ENCODE measurements at regions of chr1 and their contacts with region 1.

Region 1: GRCh38 chr1:33181921-33182341 is at the start of gene TRIM62:
- DNase-seq: peak; percentile 57 to 80 (median 73)
- ATAC-seq: peak; percentile 85
- H3K4me3 ChIP-seq: peak within 1 kb of the TSS; percentile 78
- H3K4me3 Mint-ChIP-seq: peak within 1 kb of the TSS; percentile 84 to 95 (median 89)
- H3K27ac ChIP-seq: peak within 1 kb of the TSS; percentile 64
- H3K27ac Mint-ChIP-seq: peak within 1 kb of the TSS; percentile 47 to 89 (median 79)
- H3K4me1 ChIP-seq: peaks cover 8 to 12% of the 10 kb centered on the region in 2 donors
- H3K4me1 Mint-ChIP-seq: peaks cover 22 to 35% (median 31%) of the 10 kb centered on the region in 7 donors
- H3K27me3 ChIP-seq: no peaks in the 10 kb centered on the region
- H3K27me3 Mint-ChIP-seq: peaks cover 0 to 35% (median 7%) of the 10 kb centered on the region in 5 donors
- total RNA-seq, gene TRIM62: 13.2 to 24.2 (median 19.4) TPM

Region 2: DNA sequence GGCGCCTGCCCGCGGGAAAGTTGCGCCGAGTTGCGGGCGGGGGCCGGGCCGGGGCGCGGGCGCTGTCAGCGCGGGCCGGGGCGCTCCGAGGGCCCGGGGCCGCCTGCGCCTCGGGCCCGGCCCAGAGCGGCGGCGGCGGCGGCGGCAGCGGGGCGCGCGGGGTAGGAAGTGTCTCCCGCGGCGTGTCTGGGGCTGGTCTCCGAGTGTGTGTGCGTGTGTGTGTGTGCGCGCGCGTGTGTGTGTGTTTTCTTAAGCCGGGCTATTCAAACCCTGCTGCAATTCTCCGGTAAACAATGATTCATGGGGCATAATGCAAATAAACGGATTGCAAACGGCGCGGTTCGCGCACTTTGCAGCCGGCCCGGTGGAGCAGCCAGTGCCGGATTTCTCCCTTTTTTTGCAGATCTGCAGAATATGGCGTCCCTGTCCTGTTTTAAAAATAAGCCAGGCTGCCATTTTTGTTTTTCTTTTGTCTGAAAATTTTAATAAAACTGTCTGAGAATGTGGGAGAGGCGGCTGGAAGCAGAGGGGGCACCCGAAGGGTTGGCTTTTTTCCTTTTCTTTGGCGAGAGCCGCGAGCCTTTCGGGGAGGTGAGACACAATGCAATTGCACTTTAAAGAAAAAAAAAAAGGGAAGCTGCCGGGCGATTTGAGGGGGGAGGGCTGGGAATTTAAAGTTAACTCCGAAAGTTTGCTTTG is 74.9 kb after region 1 on chr1:
- CTCF ChIA-PET with region 1: no interaction called
- POLR2A ChIA-PET with region 1: interaction called, 4 read pairs
- intact Hi-C with region 1: loop called (anchors 5 to 10 kb)
- DNase-seq: peak in 8 of 9 donors; percentile 41 to 68 (median 62)
- ATAC-seq: peak; percentile 80
- H3K4me3 ChIP-seq: peak overlapping the region; percentile 84
- H3K4me3 Mint-ChIP-seq: peak overlapping the region; percentile 97 to 100 (median 99)
- H3K27ac ChIP-seq: peak overlapping the region; percentile 74
- H3K27ac Mint-ChIP-seq: peak overlapping the region; percentile 97 to 99 (median 98)
- H3K4me1 ChIP-seq: peaks cover 16 to 31% of the 10 kb centered on the region in 2 donors
- H3K4me1 Mint-ChIP-seq: peaks cover 29 to 47% (median 42%) of the 10 kb centered on the region in 7 donors
- H3K27me3 ChIP-seq: no peaks in the 10 kb centered on the region
- H3K27me3 Mint-ChIP-seq: peaks cover 0 to under 1% (median 0%) of the 10 kb centered on the region in 5 donors

Region 3: DNA sequence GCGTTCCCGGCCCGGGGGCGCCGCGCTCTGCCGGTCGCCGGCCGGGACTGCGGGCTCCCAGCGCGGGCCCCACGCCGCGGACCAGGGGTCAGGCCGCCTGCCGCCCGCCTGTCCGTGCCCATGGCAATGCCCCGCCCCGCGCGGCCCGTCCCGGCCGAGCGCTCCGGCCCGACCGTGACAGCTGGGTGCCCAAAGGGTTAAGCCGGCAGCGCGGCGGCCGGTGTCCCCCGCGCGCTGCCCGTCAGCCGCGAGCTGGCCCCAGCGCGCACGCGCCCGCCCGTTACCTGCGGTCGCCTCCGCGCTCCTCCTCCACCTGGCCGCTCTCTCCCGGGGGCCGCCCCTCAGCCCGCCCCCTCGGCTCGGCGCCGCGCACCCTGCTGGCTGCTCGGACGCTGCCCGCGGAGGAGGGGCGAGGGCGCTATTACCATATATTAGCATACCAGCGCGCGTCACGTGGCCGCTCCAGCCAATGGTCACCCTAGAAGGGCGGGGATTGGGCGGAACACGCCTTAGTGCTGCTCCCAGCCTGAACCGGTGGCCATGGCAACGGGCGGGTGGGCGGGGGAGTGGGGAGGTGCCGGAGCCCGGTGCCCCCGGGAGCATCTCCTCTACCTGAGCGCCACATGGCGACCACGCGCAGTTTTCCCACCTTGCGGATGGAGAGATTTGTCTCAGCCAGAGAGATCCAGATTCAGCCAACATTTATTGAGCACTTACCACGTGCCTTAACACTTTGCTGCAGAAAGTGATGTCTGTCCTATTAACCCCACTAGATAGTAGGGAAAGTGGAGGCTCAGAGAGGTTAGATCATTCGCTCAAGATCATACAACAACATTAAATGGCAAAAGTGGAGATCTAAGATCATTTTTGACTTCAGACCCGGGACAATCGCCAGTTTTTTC is 249.0 kb after region 1 on chr1 and contains the start of gene PHC2:
- CTCF ChIA-PET with region 1: no interaction called
- POLR2A ChIA-PET with region 1: no interaction called
- intact Hi-C with region 1: loop called in 1 of 2 experiments (anchors 1 kb)
- DNase-seq: peak; percentile 70 to 92 (median 86)
- ATAC-seq: peak; percentile 97
- H3K4me3 ChIP-seq: peak within 1 kb of the TSS; percentile 18
- H3K4me3 Mint-ChIP-seq: peak within 1 kb of the TSS; percentile 57 to 83 (median 74)
- H3K27ac ChIP-seq: no peak within 1 kb of the TSS
- H3K27ac Mint-ChIP-seq: peak within 1 kb of the TSS in 4 of 9 donors; percentile 25 to 53 (median 44)
- H3K4me1 ChIP-seq: peaks cover 0 to 6% of the 10 kb centered on the region in 2 donors
- H3K4me1 Mint-ChIP-seq: peaks cover 0 to 5% (median 4%) of the 10 kb centered on the region in 7 donors
- H3K27me3 ChIP-seq: no peaks in the 10 kb centered on the region
- H3K27me3 Mint-ChIP-seq: peaks cover 0 to 43% (median 5%) of the 10 kb centered on the region in 5 donors
- total RNA-seq, gene PHC2: 31.9 to 45.5 (median 35.4) TPM

Region 4: DNA sequence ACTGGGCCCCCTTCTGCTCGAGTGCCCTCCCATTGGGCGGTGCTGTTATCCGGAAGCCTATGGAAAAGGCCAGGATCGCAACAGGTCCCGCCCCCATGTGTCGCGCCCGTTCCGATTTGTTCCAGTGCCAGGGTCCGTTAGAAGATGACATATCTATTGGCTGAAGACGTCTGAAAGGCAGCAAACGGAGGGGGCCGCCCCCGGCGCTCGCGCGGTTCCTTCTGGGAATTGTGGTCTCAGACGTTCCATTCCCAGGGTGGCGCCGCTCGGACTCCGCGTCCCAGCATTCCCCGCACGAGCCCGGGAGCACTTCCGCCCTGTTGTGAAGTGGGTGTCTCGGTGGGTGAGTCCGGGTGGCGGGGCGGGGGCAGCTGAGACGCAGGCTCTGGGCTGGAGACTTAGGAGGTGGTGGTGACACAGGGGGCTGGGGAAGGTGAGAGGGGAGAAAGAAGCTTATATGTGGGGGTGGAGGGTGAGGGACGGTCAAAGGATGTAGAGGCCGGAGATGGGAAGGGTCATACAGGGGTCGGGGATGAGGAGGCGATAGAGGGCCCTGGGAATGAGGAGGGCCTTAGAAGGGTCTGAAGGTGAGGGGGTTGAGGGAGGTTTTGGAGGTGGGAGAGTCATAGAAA is 290.5 kb after region 1 on chr1 and contains the start of gene ZSCAN20:
- CTCF ChIA-PET with region 1: no interaction called
- POLR2A ChIA-PET with region 1: no interaction called
- intact Hi-C with region 1: loop called in 1 of 2 experiments (anchors 1 kb)
- DNase-seq: peak; percentile 58 to 82 (median 79)
- ATAC-seq: peak; percentile 96
- H3K4me3 ChIP-seq: peak within 1 kb of the TSS; percentile 47
- H3K4me3 Mint-ChIP-seq: peak within 1 kb of the TSS; percentile 84 to 98 (median 92)
- H3K27ac ChIP-seq: peak within 1 kb of the TSS; percentile 60
- H3K27ac Mint-ChIP-seq: peak within 1 kb of the TSS; percentile 37 to 95 (median 76)
- H3K4me1 ChIP-seq: peaks cover 11 to 14% of the 10 kb centered on the region in 2 donors
- H3K4me1 Mint-ChIP-seq: peaks cover 20 to 39% (median 30%) of the 10 kb centered on the region in 7 donors
- H3K27me3 ChIP-seq: no peaks in the 10 kb centered on the region
- H3K27me3 Mint-ChIP-seq: no peaks in the 10 kb centered on the region
- total RNA-seq, gene ZSCAN20: 0.77 to 3.0 (median 2.6) TPM

Measured in naive thymus-derived CD4-positive, alpha-beta T cell (primary cell).